ENCODE measurements at regions of chr6 and their contacts with region 1.

Region 1: DNA sequence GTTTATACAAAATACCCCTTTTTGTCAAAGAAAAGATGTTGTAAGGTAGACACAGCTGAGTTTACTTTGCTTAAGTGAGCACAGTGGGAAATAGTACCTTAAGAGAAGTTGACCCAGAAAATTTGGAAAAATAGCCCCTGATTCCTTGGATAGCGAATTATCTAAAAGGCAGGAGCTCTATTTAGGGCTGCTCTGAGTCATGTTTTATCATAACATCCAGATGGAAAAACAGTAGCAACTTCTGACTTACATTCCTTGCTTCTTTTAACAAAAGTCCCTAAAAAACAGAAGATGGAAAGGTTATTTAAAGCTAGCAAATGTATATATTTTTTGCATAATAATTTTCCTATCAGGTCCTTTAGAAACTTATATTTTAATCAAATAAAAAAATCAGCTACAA is 59.0 kb downstream of the THEMIS start:
- DNase-seq: no peak
- H3K4me3 Mint-ChIP-seq: no peak overlapping the region
- H3K27ac Mint-ChIP-seq: no peak overlapping the region
- H3K4me1 Mint-ChIP-seq: peaks cover 48% of the 10 kb centered on the region
- H3K27me3 Mint-ChIP-seq: no peaks in the 10 kb centered on the region

Region 2: DNA sequence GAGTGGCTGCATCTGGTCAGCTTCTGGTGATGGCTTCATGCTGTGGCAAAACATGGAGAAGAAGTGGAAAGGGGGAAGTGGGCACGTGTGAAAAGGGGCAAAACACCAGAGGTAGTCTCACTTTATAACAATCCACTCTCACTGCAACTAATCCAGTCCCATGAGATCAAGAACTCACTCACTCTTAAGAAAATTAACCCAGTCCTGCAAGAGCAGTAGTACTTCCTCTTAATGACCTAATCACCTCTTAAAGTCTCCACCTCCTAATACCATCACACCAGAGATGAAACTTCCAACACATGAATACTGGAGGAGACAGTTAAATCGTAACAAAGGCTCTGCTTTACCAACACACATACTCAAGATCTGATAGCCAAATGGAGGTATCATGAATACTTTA is 93.5 kb before region 1 on chr6:
- CTCF ChIA-PET with region 1: no interaction called
- POLR2A ChIA-PET with region 1: no interaction called
- intact Hi-C with region 1: no loop called
- DNase-seq: no peak
- H3K4me3 Mint-ChIP-seq: peak overlapping the region; percentile 44
- H3K27ac Mint-ChIP-seq: peak overlapping the region; percentile 74
- H3K4me1 Mint-ChIP-seq: peaks cover 58% of the 10 kb centered on the region
- H3K27me3 Mint-ChIP-seq: no peaks in the 10 kb centered on the region

Region 3: GRCh38 chr6:127821431-127821830 is 20.4 kb before region 1 on chr6:
- CTCF ChIA-PET with region 1: interaction called, 3 read pairs
- POLR2A ChIA-PET with region 1: no interaction called
- intact Hi-C with region 1: loop called (anchors 2 kb)
- DNase-seq: no peak
- H3K4me3 Mint-ChIP-seq: no peak overlapping the region
- H3K27ac Mint-ChIP-seq: no peak overlapping the region
- H3K4me1 Mint-ChIP-seq: peaks cover 63% of the 10 kb centered on the region
- H3K27me3 Mint-ChIP-seq: no peaks in the 10 kb centered on the region

Measured in activated CD4-positive, alpha-beta memory T cell treated with anti-CD3 and anti-CD28 coated beads for 36 hours (primary cell).